ENCODE measurements at regions of chr1 and their contacts with region 1.

Region 1: GRCh38 chr1:203612932-203613682 is 13.5 kb upstream of the ATP2B4 start:
- DNase-seq: peak in 2 of 9 experiments; percentile 37 to 57
- ATAC-seq: peak; percentile 49
- H3K4me3 ChIP-seq: no peak overlapping the region
- H3K4me3 Mint-ChIP-seq: no peak overlapping the region
- H3K27ac ChIP-seq: no peak overlapping the region
- H3K27ac Mint-ChIP-seq: no peak overlapping the region
- H3K4me1 ChIP-seq: peaks cover 10% of the 10 kb centered on the region
- H3K4me1 Mint-ChIP-seq: peaks cover 30% of the 10 kb centered on the region
- H3K27me3 ChIP-seq: no peaks in the 10 kb centered on the region
- H3K27me3 Mint-ChIP-seq: no peaks in the 10 kb centered on the region
- CTCF ChIP-seq: no peak

Region 2: DNA sequence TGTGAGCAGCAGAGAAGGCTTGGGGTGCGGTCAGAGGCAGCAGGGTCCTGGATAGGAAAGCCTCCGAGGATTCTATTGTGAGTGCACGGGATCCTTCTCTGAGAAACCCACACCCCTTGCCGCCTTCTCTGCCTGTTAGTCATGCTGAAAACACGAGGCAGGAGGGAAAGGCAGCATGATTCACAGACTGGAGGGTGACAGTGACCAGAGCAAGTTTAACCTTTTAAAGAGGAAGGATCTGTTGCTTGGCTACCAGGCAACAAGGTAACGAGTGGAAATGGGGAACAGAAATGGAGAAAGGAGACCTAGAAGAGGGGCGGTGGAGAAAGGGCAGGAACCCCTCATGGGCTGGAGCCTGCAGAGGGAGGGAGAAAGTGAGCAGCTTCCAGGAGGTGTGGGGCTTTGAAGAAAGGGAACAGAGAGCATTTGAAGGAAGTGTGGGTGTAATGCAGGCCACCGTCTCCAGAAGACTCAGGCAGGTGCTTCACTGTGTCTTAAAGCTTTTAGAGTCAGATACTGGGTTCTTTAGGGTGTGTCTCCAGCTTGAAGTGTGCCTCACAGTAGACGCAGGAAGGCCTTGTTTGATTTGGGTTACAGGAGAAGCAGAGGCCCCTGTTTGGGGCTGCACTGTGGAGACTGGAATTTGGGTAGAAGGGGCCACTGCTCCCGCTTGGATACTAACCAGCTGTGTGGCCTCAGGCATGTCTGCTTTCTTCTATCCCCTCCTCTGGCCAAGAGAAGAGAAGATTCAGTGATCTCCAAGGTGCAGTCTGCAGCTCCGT is 100.1 kb before region 1 on chr1:
- CTCF ChIA-PET with region 1: no interaction called
- POLR2A ChIA-PET with region 1: no interaction called
- intact Hi-C with region 1: loop called in 1 of 2 experiments (anchors 5 kb)
- DNase-seq: peak in 2 of 9 experiments; percentile 29 to 34
- ATAC-seq: peak; percentile 42
- H3K4me3 ChIP-seq: no peak overlapping the region
- H3K4me3 Mint-ChIP-seq: peak overlapping the region; percentile 1
- H3K27ac ChIP-seq: peak overlapping the region in 1 of 2 experiments; percentile 11
- H3K27ac Mint-ChIP-seq: peak overlapping the region; percentile 74
- H3K4me1 ChIP-seq: peaks cover 15% of the 10 kb centered on the region
- H3K4me1 Mint-ChIP-seq: peaks cover 28% of the 10 kb centered on the region
- H3K27me3 ChIP-seq: no peaks in the 10 kb centered on the region
- H3K27me3 Mint-ChIP-seq: peaks cover 3% of the 10 kb centered on the region
- CTCF ChIP-seq: no peak

Region 3: GRCh38 chr1:203663294-203663693 is 50.2 kb after region 1 on chr1:
- CTCF ChIA-PET with region 1: no interaction called
- POLR2A ChIA-PET with region 1: no interaction called
- intact Hi-C with region 1: no loop called
- DNase-seq: peak in 1 of 9 experiments; percentile 54
- ATAC-seq: peak; percentile 67
- H3K4me3 ChIP-seq: no peak overlapping the region
- H3K4me3 Mint-ChIP-seq: peak overlapping the region; percentile 12
- H3K27ac ChIP-seq: peak overlapping the region in 1 of 2 experiments; percentile 50
- H3K27ac Mint-ChIP-seq: peak overlapping the region; percentile 73
- H3K4me1 ChIP-seq: peaks cover 22% of the 10 kb centered on the region
- H3K4me1 Mint-ChIP-seq: peaks cover 53% of the 10 kb centered on the region
- H3K27me3 ChIP-seq: no peaks in the 10 kb centered on the region
- H3K27me3 Mint-ChIP-seq: no peaks in the 10 kb centered on the region
- CTCF ChIP-seq: no peak

Region 4: GRCh38 chr1:203764082-203765028 is 151.2 kb after region 1 on chr1:
- CTCF ChIA-PET with region 1: no interaction called
- POLR2A ChIA-PET with region 1: no interaction called
- intact Hi-C with region 1: loop called (anchors 5 kb)
- DNase-seq: peak in 1 of 9 experiments; percentile 20
- ATAC-seq: peak; percentile 1
- H3K4me3 ChIP-seq: peak overlapping the region; percentile 62 to 63
- H3K4me3 Mint-ChIP-seq: peak overlapping the region; percentile 95
- H3K27ac ChIP-seq: peak overlapping the region; percentile 72 to 87
- H3K27ac Mint-ChIP-seq: peak overlapping the region; percentile 99
- H3K4me1 ChIP-seq: peaks cover 36% of the 10 kb centered on the region
- H3K4me1 Mint-ChIP-seq: peaks cover 54% of the 10 kb centered on the region
- H3K27me3 ChIP-seq: no peaks in the 10 kb centered on the region
- H3K27me3 Mint-ChIP-seq: no peaks in the 10 kb centered on the region
- CTCF ChIP-seq: no peak

Measured in CD8-positive, alpha-beta T cell (primary cell).